Calu3 (cell line): ENCODE measurements at regions of chr16 and their contacts with region 1.

Region 1: GRCh38 chr16:81140930-81141780 is 45.0 kb upstream of the GCSH start:
- DNase-seq: peak; percentile 60
- H3K4me3 Mint-ChIP-seq: no peak overlapping the region
- H3K27ac Mint-ChIP-seq: peak overlapping the region; percentile 85
- H3K4me1 Mint-ChIP-seq: peaks cover 51% of the 10 kb centered on the region
- H3K27me3 Mint-ChIP-seq: no peaks in the 10 kb centered on the region
- CTCF ChIP-seq: peak; percentile 53

Region 2: DNA sequence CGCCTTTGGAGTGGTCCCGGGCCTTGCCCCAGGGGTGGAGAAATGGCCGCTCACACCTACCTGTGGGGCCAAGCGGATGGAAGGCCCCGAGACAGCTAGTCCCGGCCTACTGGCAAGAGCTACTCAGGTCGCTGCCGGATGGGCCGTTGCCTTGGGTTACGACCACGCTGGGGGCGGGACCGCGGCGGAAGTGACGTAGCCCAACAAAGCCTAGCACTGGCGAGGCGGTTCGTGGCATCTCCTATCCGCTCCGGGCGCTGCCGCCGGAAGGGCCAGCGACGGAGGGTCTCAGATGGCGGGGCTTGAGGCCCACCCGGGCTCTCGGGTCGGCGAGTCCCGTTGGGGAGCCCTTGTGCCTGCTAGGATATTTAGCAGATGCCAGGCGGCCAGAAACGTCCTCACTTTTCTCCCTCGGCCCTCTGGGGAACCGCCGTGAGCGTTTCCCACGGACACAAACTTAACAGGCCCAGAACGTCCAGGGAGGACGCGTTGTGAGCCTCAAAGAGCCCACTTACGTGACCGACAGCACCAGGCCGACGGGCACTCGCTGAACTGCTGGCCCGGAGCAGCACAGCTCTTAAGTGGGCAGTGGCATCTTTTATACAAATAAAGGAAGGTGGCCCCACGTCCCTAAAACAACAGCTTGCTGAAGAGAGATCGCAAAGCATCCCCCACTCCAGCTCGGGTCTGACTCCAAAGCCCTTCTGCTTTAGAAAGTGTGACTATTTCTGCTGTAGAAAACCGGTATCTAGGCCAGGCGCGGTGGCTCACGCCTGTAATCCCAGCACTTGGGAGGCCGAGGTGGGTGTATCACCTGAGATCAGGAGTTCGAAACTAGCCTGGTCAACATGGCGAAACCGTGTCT is 63.8 kb before region 1 on chr16 and contains the start of gene C16orf46:
- CTCF ChIA-PET with region 1: no interaction called
- intact Hi-C with region 1: loop called (anchors 5 kb)
- DNase-seq: peak; percentile 99
- H3K4me3 Mint-ChIP-seq: no peak within 1 kb of the TSS
- H3K27ac Mint-ChIP-seq: no peak within 1 kb of the TSS
- H3K4me1 Mint-ChIP-seq: no peaks in the 10 kb centered on the region
- H3K27me3 Mint-ChIP-seq: no peaks in the 10 kb centered on the region
- CTCF ChIP-seq: no peak
- total RNA-seq, gene C16orf46: 2.2 TPM in 1 of 2 replicates, not detected in the other

Region 3: GRCh38 chr16:81181013-81181720 is 40.0 kb after region 1 on chr16:
- CTCF ChIA-PET with region 1: interaction called, 5 read pairs
- intact Hi-C with region 1: loop called (anchors 1 kb)
- DNase-seq: peak; percentile 92
- H3K4me3 Mint-ChIP-seq: peak overlapping the region; percentile 67
- H3K27ac Mint-ChIP-seq: peak overlapping the region; percentile 90
- H3K4me1 Mint-ChIP-seq: peaks cover 26% of the 10 kb centered on the region
- H3K27me3 Mint-ChIP-seq: no peaks in the 10 kb centered on the region
- CTCF ChIP-seq: no peak

Region 4: DNA sequence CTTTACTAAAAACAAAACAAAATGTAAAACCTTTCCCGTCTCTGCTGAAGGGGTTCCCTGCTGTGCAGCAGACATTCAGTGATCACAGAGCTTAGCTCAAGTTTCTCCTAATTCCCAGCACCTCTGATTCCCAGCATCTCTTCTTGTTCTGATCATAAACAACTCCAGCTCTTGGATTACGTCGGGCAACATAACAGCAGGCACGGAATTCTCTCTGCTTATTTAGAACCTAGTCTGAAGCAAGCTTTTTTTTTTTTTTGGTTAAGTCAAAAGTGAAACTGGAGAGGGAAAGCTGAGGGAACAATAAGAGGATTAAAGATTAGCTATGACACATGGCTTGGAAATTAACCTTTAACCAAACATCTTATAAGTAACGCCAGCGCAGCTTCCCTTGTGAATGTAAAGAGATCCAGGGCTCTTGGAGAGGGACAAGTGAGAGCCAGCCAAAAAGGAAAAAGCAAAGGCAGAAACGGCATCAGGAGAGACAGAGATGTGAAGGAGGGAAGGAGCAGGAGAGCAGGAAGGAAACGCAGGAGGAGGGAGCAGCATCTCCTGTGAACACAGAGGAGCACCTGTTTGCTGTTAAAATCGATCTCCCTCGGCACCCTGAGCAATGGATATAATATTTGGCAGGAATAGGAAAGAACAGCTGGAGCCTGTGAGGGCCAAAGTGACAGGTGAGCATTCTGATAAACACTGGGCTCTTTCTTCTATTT is 97.3 kb after region 1 on chr16 and contains the start of gene BCO1:
- CTCF ChIA-PET with region 1: interaction called, 4 read pairs
- intact Hi-C with region 1: loop called (anchors 1 kb)
- DNase-seq: peak; percentile 57
- H3K4me3 Mint-ChIP-seq: peak within 1 kb of the TSS; percentile 81
- H3K27ac Mint-ChIP-seq: peak within 1 kb of the TSS; percentile 85
- H3K4me1 Mint-ChIP-seq: peaks cover 27% of the 10 kb centered on the region
- H3K27me3 Mint-ChIP-seq: no peaks in the 10 kb centered on the region
- CTCF ChIP-seq: no peak
- total RNA-seq, gene BCO1: 6.6 and 9.1 TPM in 2 replicates